Heart left ventricle (tissue), 16 donors: ENCODE measurements at regions of chr16 and their contacts with region 1.

Region 1: GRCh38 chr16:87778830-87779579 is 13.2 kb upstream of the KLHDC4 start:
- DNase-seq: peak; percentile 80 to 94 (median 89)
- ATAC-seq: peak; percentile 81 to 94 (median 92)
- H3K4me3 ChIP-seq: no peak overlapping the region
- H3K27ac ChIP-seq: peak overlapping the region in 1 of 12 donors; percentile 49
- H3K4me1 ChIP-seq: peaks cover 0 to 41% (median 7%) of the 10 kb centered on the region in 12 donors
- H3K27me3 ChIP-seq: peaks cover 0 to 9% (median 0%) of the 10 kb centered on the region in 9 donors
- CTCF ChIP-seq: peak; percentile 94 to 100 (median 97)
- POLR2A ChIP-seq: no peak

Region 2: DNA sequence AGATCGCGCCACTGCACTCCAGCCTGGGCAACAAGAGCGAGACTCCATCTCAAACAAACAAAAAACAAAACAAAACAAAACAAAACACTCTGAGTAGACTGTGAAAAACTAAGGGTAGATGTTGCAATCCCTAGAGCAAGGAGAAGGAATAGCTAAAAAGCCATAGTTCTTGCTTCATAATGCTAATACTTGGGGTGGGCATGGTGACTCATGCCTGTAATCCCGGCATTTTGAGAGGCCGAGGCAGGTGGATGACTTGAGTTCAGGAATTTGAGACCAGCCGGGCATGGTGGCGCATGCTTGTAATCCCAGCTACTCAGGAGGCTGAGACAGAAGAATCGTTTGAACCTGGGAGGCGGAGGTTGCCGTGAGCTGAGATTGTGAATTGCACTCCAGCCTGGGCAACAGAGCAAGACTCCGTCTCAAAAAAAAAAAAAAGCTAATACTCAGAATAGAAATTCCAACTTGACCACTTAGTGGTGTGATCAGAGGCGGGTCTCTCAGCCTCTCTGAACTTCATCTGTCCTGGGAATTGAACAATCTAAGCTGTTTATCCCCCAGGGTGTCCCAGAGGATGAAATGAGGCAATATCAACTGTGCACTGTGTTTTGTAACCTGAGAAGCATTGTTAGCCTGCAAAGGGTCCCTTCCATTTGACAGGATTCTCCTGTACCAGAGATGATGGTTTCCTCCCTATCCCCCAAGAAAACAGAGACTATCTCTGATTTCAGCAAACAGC is 14.9 kb after region 1 on chr16:
- intact Hi-C with region 1: no loop called
- DNase-seq: no peak
- ATAC-seq: no peak
- H3K4me3 ChIP-seq: no peak overlapping the region
- H3K27ac ChIP-seq: no peak overlapping the region
- H3K4me1 ChIP-seq: peaks cover 0 to 9% (median 0%) of the 10 kb centered on the region in 12 donors
- H3K27me3 ChIP-seq: no peaks in the 10 kb centered on the region
- CTCF ChIP-seq: no peak
- POLR2A ChIP-seq: no peak

Region 3: DNA sequence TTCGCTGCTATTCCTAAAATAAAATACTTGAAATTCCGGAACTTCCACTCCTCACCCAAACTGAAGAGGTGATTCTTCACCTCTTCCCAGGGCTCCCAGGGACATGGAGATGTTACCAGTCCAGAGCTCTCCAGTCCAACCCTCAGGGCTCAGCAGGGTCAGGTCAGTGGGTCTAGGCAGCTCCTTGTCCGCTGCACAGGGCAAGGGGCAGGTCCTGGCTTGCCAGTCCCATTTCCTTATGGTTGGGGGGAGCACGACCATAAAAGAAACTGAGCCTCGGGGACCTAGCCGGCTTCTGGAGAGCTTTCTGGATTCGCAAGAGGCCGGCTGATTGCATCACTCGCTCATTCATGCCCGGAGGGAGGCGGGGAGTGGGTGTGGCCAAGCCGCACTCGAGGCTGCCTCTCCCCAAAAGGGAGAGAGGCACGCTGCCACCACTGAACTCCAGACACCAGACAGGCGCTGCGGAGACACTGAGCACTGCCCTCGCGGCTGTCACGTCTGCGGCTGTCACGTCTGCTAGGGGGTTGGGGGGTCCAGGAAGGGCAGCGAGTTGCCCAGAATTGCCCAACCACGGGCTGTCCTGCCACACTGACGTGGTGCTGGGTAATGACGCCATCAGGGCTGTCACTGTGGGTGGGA is 74.5 kb after region 1 on chr16:
- intact Hi-C with region 1: loop called in 3 of 10 experiments (anchors 5 kb)
- DNase-seq: peak; percentile 90 to 96 (median 95)
- ATAC-seq: peak; percentile 78 to 92 (median 89)
- H3K4me3 ChIP-seq: peak overlapping the region in 9 of 12 donors; percentile 15 to 42 (median 20)
- H3K27ac ChIP-seq: peak overlapping the region in 9 of 12 donors; percentile 5 to 89 (median 60)
- H3K4me1 ChIP-seq: peaks cover 0 to 65% (median 17%) of the 10 kb centered on the region in 12 donors
- H3K27me3 ChIP-seq: no peaks in the 10 kb centered on the region
- CTCF ChIP-seq: no peak
- POLR2A ChIP-seq: peak in 1 of 2 donors; percentile 66

Region 4: GRCh38 chr16:87874639-87875465 is 95.8 kb after region 1 on chr16:
- intact Hi-C with region 1: loop called (anchors 1 to 2 kb)
- DNase-seq: no peak
- ATAC-seq: no peak
- H3K4me3 ChIP-seq: no peak overlapping the region
- H3K27ac ChIP-seq: no peak overlapping the region
- H3K4me1 ChIP-seq: peaks cover 0 to 8% (median 2%) of the 10 kb centered on the region in 12 donors
- H3K27me3 ChIP-seq: peaks cover 0 to 21% (median 5%) of the 10 kb centered on the region in 9 donors
- CTCF ChIP-seq: no peak
- POLR2A ChIP-seq: no peak

Region 5: GRCh38 chr16:87895641-87896141 is 116.7 kb after region 1 on chr16:
- intact Hi-C with region 1: loop called in 2 of 10 experiments (anchors 10 kb)
- DNase-seq: no peak
- ATAC-seq: peak in 3 of 4 donors; percentile 15 to 23 (median 16)
- H3K4me3 ChIP-seq: no peak overlapping the region
- H3K27ac ChIP-seq: peak overlapping the region in 1 of 12 donors; percentile 42
- H3K4me1 ChIP-seq: peaks cover 0 to 30% (median 0%) of the 10 kb centered on the region in 12 donors
- H3K27me3 ChIP-seq: no peaks in the 10 kb centered on the region
- CTCF ChIP-seq: no peak
- POLR2A ChIP-seq: no peak

Region 6: GRCh38 chr16:88505405-88506082 is 726.5 kb after region 1 on chr16:
- intact Hi-C with region 1: no loop called
- DNase-seq: peak in 2 of 5 donors; percentile 30 to 52
- ATAC-seq: peak in 3 of 4 donors; percentile 6 to 14 (median 11)
- H3K4me3 ChIP-seq: no peak overlapping the region
- H3K27ac ChIP-seq: no peak overlapping the region
- H3K4me1 ChIP-seq: peaks cover 0 to 7% (median 0%) of the 10 kb centered on the region in 12 donors
- H3K27me3 ChIP-seq: no peaks in the 10 kb centered on the region
- CTCF ChIP-seq: peak in 10 of 12 donors; percentile 9 to 45 (median 26)
- POLR2A ChIP-seq: no peak